ENCODE measurements at regions of chr9 and their contacts with region 1.

Region 1: GRCh38 chr9:34252670-34253459 is 74.0 kb downstream of the UBAP1 start:
- DNase-seq: peak in 1 of 2 experiments; percentile 56
- H3K4me3 ChIP-seq: no peak overlapping the region
- H3K27ac ChIP-seq: peak overlapping the region; percentile 42; the same call in 1 of the 2 replicates
- H3K4me1 ChIP-seq: peaks cover 27% of the 10 kb centered on the region
- H3K27me3 ChIP-seq: no peaks in the 10 kb centered on the region
- CTCF ChIP-seq: peak; percentile 89

Region 2: DNA sequence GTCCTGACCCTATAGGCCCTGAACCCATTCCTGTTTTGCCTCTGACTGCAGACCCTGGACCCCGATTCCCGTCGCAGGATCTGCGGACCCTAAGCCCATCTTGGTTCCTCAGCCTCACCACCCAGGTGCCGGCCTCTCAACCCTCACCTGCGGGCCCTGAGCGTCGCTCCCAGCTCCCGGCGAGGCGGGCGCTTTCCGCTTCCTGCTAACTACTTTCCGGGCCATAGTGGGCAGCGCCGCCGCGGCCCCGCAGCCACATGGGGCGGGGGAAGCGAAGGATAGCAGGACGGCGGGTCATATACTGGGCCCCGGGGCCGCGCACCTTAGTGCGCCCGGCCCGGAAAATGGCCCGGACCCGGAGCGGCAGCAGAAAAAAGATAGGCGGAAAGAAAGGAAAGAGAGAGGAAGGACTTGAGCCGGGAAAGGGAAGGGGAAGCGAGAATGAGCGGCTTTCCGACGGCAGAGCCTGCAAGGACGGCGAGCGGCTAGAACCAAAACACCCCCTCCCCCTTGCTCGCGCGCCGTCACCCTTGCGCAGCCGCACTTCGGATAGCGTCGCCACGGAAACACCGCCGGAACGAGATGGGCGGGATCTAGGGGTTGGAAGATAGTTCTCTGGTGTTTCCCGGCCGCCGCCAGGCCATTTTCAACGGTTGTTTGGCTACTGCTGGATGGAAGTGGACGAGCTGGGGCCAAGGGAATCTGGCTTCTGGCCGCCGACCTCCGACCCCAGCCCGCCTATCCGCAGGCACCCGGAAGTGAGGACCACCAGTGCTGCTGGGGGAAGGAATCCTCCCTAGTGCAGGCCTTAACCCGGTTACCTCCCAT is 126.4 kb before region 1 on chr9 and contains the start of gene DCAF12:
- CTCF ChIA-PET with region 1: no interaction called
- POLR2A ChIA-PET with region 1: no interaction called
- intact Hi-C with region 1: loop called (anchors 5 kb)
- DNase-seq: peak; percentile 74 to 82
- H3K4me3 ChIP-seq: peak within 1 kb of the TSS; percentile 97
- H3K27ac ChIP-seq: peak within 1 kb of the TSS; percentile 71
- H3K4me1 ChIP-seq: peaks cover 14% of the 10 kb centered on the region
- H3K27me3 ChIP-seq: no peaks in the 10 kb centered on the region
- CTCF ChIP-seq: no peak
- total RNA-seq, gene DCAF12: 18.1 and 23.4 TPM in 2 replicates

Region 3: DNA sequence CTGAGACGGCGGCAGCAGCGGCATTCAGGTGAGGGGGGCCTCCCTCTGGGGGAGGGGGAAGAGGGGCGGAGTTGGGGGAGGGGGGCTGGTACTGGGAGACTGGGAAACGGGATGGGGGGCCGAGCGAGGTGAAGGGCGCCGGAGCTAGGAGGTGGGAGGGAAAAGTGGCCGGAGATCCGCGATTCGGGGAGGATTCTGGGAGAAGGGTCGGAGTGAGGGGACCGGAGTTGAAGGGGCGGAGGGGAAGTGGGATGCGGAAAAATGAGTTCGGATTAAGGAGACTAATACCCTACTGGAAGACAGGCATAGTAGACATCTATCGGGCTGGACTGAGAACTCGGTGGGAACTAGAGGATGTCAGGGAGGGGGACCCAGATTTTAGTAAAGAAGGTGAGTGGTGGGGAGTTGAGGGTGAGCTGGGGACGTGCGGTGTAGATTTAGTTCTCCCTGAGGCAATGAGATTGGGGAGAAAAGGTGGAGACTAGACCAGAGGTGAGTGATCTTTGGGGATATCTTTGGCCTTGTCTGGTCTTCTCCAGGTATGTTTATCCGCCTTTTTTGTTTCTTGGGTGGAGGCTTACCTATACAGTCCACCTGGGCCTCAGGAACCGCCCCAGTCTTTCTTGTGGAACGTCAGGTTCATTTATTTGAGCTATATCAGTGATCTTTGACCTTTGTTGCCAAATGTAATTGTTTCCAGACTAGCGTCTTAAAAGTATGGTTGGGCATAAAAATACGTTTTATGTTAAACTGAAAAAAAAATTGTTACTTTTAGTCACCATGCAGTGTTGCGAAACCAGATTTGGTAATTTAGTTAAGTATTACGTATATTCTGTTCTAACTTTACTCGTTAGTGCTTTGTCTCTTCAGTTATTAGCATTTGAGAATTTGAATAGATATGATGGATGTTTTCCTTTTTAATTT is 73.4 kb before region 1 on chr9:
- CTCF ChIA-PET with region 1: no interaction called
- POLR2A ChIA-PET with region 1: interaction called, 38 read pairs
- intact Hi-C with region 1: no loop called
- DNase-seq: peak in 1 of 2 experiments; percentile 51
- H3K4me3 ChIP-seq: peak overlapping the region; percentile 76
- H3K27ac ChIP-seq: peak overlapping the region; percentile 91
- H3K4me1 ChIP-seq: peaks cover 20% of the 10 kb centered on the region
- H3K27me3 ChIP-seq: no peaks in the 10 kb centered on the region
- CTCF ChIP-seq: no peak

Region 4: GRCh38 chr9:34233672-34234071 is 19.2 kb before region 1 on chr9:
- CTCF ChIA-PET with region 1: no interaction called
- POLR2A ChIA-PET with region 1: no interaction called
- intact Hi-C with region 1: no loop called
- DNase-seq: no peak
- H3K4me3 ChIP-seq: no peak overlapping the region
- H3K27ac ChIP-seq: no peak overlapping the region
- H3K4me1 ChIP-seq: no peaks in the 10 kb centered on the region
- H3K27me3 ChIP-seq: no peaks in the 10 kb centered on the region
- CTCF ChIP-seq: no peak

Region 5: GRCh38 chr9:34291023-34291422 is 38.2 kb after region 1 on chr9:
- CTCF ChIA-PET with region 1: no interaction called
- POLR2A ChIA-PET with region 1: no interaction called
- intact Hi-C with region 1: no loop called
- DNase-seq: no peak
- H3K4me3 ChIP-seq: no peak overlapping the region
- H3K27ac ChIP-seq: no peak overlapping the region
- H3K4me1 ChIP-seq: no peaks in the 10 kb centered on the region
- H3K27me3 ChIP-seq: no peaks in the 10 kb centered on the region
- CTCF ChIP-seq: no peak

Region 6: GRCh38 chr9:34376596-34377403 is 123.9 kb after region 1 on chr9 and contains the start of gene MYORG:
- CTCF ChIA-PET with region 1: interaction called, 5 read pairs
- POLR2A ChIA-PET with region 1: no interaction called
- intact Hi-C with region 1: loop called (anchors 5 kb)
- DNase-seq: peak; percentile 87 to 96
- H3K4me3 ChIP-seq: peak within 1 kb of the TSS; percentile 62
- H3K27ac ChIP-seq: no peak within 1 kb of the TSS
- H3K4me1 ChIP-seq: peaks cover 7% of the 10 kb centered on the region; the same call in 1 of the 2 replicates
- H3K27me3 ChIP-seq: no peaks in the 10 kb centered on the region
- CTCF ChIP-seq: no peak
- total RNA-seq, gene MYORG: 3.0 and 3.1 TPM in 2 replicates

Region 7: GRCh38 chr9:34603610-34604231 is 350.9 kb after region 1 on chr9:
- CTCF ChIA-PET with region 1: no interaction called
- POLR2A ChIA-PET with region 1: no interaction called
- intact Hi-C with region 1: loop called (anchors 10 kb)
- DNase-seq: peak; percentile 37 to 63
- H3K4me3 ChIP-seq: no peak overlapping the region
- H3K27ac ChIP-seq: no peak overlapping the region
- H3K4me1 ChIP-seq: no peaks in the 10 kb centered on the region
- H3K27me3 ChIP-seq: no peaks in the 10 kb centered on the region
- CTCF ChIP-seq: peak; percentile 90

Region 8: DNA sequence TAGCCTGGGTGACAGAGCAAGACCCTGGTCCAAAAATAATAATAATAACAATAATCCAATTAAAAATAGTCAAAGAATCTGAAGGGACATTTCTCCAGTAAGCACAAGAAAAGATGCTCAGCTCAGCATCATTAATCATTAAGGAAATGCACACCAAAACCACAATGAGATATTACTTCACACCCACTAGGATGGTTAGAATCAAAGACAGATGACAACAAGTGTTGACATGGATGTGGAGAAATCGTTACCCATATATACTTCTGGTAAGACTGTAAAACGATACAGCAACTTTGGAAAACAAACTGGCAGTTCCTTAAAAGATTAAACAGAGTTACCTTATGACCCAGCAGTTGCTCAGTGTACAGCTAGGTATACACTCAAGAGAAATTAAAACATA is 832.2 kb after region 1 on chr9:
- CTCF ChIA-PET with region 1: no interaction called
- POLR2A ChIA-PET with region 1: no interaction called
- intact Hi-C with region 1: no loop called
- DNase-seq: no peak
- H3K4me3 ChIP-seq: no peak overlapping the region
- H3K27ac ChIP-seq: no peak overlapping the region
- H3K4me1 ChIP-seq: no peaks in the 10 kb centered on the region
- H3K27me3 ChIP-seq: no peaks in the 10 kb centered on the region
- CTCF ChIP-seq: no peak